ENCODE measurements at regions of chr10 and their contacts with region 1.

Region 1: DNA sequence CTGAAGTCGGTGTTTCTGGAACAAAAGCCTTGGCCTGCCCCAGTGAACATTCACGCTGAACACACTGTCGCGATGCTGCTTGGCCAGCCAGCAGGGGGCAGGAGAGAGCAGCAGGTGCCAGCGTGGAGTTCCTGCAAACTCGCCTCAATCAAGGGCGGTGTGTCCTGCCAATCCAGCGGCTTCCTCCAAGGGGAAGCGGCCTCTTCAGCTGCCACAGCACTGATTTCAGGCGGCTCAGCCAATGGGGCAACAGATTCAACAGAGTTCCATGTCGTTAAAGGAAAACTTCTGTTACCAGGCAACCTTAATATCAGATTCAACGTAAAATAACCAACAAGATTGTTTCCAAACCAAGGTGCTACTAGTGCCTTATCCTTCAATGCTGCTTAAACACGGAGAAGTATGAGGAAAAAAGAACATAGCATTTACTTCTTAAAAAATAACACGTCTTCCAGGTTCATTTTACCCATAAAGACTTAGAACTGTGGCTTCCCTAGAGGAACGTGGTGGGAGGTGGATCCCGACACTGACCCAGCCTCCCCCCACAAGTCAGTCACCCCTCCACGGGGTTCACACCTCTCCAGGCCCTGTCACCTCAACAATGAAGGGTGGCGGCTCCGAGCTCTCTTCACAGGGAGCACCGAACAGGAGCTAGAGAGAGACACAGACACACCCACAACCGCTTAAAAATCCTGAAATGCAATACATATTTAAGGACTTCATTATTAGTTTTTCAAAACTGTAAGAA is 178.2 kb downstream of the DIP2C start:
- DNase-seq: peak; percentile 86 to 100 (median 94)
- ATAC-seq: peak; percentile 80 to 87 (median 84)
- H3K4me3 ChIP-seq: no peak overlapping the region
- H3K27ac ChIP-seq: peak overlapping the region in 2 of 4 donors; percentile 31 to 33
- H3K4me1 ChIP-seq: peaks cover 0 to 11% (median 5%) of the 10 kb centered on the region in 3 donors
- H3K27me3 ChIP-seq: no peaks in the 10 kb centered on the region
- CTCF ChIP-seq: peak; percentile 83 to 98 (median 96)

Region 2: DNA sequence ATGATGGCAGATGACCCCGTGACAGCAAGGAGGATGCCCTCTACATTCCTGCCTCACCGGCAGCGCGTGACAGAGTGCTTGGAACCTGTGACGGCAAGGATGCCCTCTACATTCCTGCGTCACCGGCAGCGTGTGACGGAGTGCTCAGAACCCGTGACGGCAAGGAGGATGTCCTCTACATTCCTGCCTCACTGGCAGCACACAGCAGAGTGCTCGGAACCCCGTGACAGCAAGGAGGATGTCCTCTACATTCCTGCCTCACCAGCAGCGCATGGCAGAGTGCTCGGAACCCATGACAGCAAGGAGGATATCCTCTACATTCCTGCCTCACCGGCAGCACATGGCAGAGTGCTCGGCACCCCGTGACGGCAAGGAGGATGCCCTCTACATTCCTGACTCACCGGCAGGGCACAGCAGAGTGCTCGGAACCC is 52.8 kb before region 1 on chr10:
- intact Hi-C with region 1: no loop called
- DNase-seq: no peak
- ATAC-seq: no peak
- H3K4me3 ChIP-seq: no peak overlapping the region
- H3K27ac ChIP-seq: no peak overlapping the region
- H3K4me1 ChIP-seq: no peaks in the 10 kb centered on the region
- H3K27me3 ChIP-seq: no peaks in the 10 kb centered on the region
- CTCF ChIP-seq: no peak

Region 3: DNA sequence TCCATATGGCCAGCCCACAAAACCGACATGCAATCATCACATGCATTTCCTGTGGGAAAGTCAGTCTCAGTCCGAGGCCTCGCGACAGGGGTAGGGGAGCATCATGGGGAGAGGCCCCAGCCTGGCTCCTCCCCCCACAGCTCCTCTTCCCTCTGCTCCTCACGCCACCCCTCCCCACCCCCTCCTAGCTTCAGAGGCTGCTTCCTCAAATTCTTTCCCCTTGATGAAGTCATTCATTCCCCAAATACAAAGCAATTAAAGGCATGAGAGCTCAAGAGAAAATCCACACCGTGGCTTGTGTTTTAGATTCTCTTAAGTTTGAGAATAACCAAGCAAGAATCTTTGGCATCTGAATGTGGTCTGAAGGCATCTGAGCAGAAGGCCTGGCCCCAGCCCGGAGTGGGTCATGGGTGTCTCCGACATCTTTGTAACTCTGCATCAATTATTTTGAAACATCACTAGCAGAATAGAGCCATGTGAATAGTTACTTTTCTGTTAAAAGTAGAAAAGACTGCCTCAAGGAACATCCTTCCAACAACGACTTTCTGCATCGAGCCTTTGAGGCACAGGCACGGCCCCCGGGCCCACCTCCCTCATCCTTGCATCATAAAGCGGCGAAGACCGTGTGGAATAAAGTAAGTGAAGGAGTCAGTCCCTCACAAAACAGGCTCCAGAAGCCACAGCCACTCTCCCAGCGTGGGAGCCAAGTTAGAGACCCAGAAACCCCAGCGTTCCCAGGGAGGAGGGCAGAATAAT is 87.3 kb after region 1 on chr10:
- intact Hi-C with region 1: no loop called
- DNase-seq: peak in 1 of 6 donors; percentile 24
- ATAC-seq: no peak
- H3K4me3 ChIP-seq: no peak overlapping the region
- H3K27ac ChIP-seq: no peak overlapping the region
- H3K4me1 ChIP-seq: peaks cover 12 to 14% (median 14%) of the 10 kb centered on the region in 3 donors
- H3K27me3 ChIP-seq: no peaks in the 10 kb centered on the region
- CTCF ChIP-seq: no peak

Region 4: GRCh38 chr10:646118-646524 is 134.8 kb after region 1 on chr10:
- intact Hi-C with region 1: no loop called
- DNase-seq: peak in 2 of 6 donors; percentile 9 to 20
- ATAC-seq: no peak
- H3K4me3 ChIP-seq: no peak overlapping the region
- H3K27ac ChIP-seq: no peak overlapping the region
- H3K4me1 ChIP-seq: peaks cover 5 to 16% (median 6%) of the 10 kb centered on the region in 3 donors
- H3K27me3 ChIP-seq: no peaks in the 10 kb centered on the region
- CTCF ChIP-seq: no peak

Region 5: DNA sequence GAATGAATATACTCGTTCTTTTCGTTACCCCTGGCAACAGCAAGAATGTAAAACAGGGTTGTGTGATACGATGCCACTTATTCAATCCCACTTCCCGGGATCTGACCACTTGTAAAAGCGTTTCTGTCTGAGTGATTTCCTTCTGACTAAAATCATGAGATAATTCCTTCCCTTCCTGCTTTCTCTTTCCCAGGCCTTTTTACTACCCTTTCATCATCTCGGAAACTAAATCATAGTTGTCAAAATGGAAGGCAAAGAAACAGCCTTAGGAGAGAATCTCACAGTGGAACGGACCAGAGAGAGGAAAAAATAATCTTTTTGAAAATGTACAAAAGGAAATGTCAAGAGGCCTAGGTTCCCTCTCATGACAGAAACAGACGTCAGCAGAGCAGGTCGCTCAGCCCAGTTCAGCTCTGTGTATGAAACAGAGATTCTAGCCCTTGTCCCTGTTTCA is 148.4 kb after region 1 on chr10:
- intact Hi-C with region 1: loop called in 1 of 3 experiments (anchors 10 kb)
- DNase-seq: no peak
- ATAC-seq: no peak
- H3K4me3 ChIP-seq: no peak overlapping the region
- H3K27ac ChIP-seq: peak overlapping the region in 2 of 4 donors; percentile 1 to 34
- H3K4me1 ChIP-seq: peaks cover 20 to 38% (median 35%) of the 10 kb centered on the region in 3 donors
- H3K27me3 ChIP-seq: no peaks in the 10 kb centered on the region
- CTCF ChIP-seq: no peak

Region 6: GRCh38 chr10:784403-785088 is 273.3 kb after region 1 on chr10:
- intact Hi-C with region 1: loop called in 2 of 3 experiments (anchors 5 to 10 kb)
- DNase-seq: peak; percentile 54 to 90 (median 74)
- ATAC-seq: peak; percentile 73 to 88 (median 82)
- H3K4me3 ChIP-seq: peak overlapping the region in 3 of 4 donors; percentile 18 to 50 (median 33)
- H3K27ac ChIP-seq: peak overlapping the region in 1 of 4 donors; percentile 10
- H3K4me1 ChIP-seq: no peaks in the 10 kb centered on the region
- H3K27me3 ChIP-seq: no peaks in the 10 kb centered on the region
- CTCF ChIP-seq: no peak

Region 7: GRCh38 chr10:794466-794865 is 283.2 kb after region 1 on chr10:
- intact Hi-C with region 1: loop called in 2 of 3 experiments (anchors 5 kb)
- DNase-seq: peak in 1 of 6 donors; percentile 44
- ATAC-seq: peak; percentile 27 to 70 (median 55)
- H3K4me3 ChIP-seq: no peak overlapping the region
- H3K27ac ChIP-seq: no peak overlapping the region
- H3K4me1 ChIP-seq: no peaks in the 10 kb centered on the region
- H3K27me3 ChIP-seq: no peaks in the 10 kb centered on the region
- CTCF ChIP-seq: no peak

Region 8: DNA sequence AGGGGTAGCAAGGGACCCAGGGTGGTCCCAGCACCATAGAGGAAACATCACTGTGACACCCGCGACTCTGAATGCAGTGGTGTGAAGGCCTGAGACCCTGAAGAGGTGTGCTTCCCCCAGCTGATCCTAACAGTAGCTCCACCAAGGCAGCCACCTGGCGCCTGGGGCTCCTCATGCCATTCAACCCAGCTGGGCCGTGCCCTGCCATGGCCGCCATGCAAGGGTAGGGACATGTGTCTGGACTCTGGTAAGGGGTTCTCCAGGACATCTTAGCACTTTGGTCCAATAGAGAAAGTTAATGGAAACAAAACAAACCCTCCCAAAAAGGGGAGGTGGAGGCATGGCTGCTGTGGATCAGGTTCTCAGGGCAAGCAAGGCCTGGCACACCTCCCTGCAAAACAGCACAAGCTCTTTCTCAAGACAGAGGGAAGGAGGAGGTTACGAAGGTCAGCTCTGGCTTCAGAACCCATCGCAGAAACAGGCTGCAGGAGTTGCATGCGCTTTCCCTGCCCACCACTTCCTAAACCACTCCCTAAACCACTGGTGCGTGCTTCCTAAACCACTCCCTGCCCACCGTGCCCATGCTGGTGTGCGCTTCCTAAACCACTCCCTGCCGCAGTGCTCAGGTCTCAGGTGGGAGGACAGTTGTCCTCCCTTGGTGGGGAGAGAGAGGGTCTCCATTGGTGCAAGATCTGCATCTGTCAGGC is 311.5 kb after region 1 on chr10:
- intact Hi-C with region 1: no loop called
- DNase-seq: no peak
- ATAC-seq: no peak
- H3K4me3 ChIP-seq: no peak overlapping the region
- H3K27ac ChIP-seq: no peak overlapping the region
- H3K4me1 ChIP-seq: no peaks in the 10 kb centered on the region
- H3K27me3 ChIP-seq: no peaks in the 10 kb centered on the region
- CTCF ChIP-seq: no peak